Activated CD4-positive, alpha-beta memory T cell treated with anti-CD3 and anti-CD28 coated beads, Interleukin-2, amount 10 ng/mL, durations not matched to agents 7 days and 5 days (primary cell): ENCODE measurements at regions of chr1 and their contacts with region 1.

Region 1: DNA sequence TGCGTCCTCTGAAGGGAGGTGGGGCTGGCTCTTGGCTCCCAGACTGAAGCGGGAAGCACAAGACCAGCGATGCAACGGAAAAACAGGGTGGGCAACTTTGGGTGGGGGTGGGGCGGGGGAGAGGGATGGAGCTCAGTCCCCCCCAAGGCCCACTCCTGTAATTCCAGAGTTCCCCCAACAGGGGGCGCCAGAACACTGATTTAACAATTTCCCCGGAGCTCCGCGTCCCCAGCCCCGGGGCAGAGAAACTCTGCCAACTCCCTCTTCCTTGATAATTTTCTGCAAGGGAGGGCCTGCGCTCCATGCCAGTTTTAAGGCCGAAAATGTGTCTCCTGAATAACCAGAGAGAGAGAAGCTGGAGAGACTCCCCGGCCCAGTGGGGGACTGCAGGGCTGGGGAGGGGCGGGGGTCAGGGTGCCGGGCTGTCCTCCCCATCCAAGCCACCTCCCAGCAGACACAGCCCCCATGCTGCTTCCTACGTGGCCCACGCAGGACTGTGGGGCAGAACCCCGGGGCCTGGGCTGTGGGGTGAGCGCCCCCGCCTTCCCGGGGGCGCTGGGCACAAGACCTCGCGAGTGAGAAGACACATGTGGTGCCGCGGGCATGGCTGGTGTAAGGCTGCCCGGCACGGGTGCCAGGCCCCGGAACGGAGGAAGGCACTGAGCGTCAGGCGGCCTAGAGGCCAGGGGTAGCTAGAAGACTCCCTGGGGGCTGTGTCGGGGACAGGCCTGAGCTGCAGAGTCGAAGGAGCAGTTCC is 51.4 kb downstream of the KIF21B start:
- DNase-seq: peak; percentile 58
- H3K4me3 Mint-ChIP-seq: no peak overlapping the region
- H3K27ac Mint-ChIP-seq: no peak overlapping the region
- H3K4me1 Mint-ChIP-seq: no peaks in the 10 kb centered on the region
- H3K27me3 Mint-ChIP-seq: no peaks in the 10 kb centered on the region

Region 2: DNA sequence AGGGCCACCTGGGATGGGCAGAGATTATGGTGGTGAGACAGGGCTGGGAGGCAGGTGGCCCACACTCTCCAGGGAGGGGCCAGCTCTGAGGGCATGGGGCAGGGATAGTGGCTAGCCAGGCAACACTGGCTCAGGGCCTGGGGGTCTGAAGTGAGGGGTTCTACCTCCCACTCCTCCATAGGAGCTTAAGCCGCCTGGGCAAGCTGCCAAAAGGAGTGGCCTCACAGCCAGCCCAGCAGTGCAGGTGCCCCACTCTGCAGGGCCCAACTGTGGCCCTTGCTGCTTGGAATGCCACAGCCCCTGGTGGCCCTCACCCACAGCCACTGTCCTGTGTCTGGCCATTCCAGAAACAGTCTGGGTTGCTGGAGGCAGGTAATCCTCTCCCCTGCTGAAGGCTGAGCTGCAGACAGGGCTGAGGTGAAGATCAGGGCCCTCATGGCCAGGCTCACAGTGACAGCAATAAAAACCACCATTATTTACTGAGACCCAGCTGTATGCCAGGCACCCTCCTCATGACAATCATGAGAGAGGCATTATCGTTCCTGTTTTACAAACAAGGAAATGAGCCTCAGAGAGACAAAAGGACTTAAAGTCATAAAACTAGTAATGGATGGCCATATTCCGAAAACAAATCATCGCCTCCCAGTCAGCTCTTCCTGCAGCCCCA is 20.4 kb after region 1 on chr1:
- CTCF ChIA-PET with region 1: interaction called, 11 read pairs
- POLR2A ChIA-PET with region 1: no interaction called
- DNase-seq: no peak
- H3K4me3 Mint-ChIP-seq: no peak overlapping the region
- H3K27ac Mint-ChIP-seq: no peak overlapping the region
- H3K4me1 Mint-ChIP-seq: no peaks in the 10 kb centered on the region
- H3K27me3 Mint-ChIP-seq: no peaks in the 10 kb centered on the region

Region 3: GRCh38 chr1:201023517-201023902 is 51.4 kb after region 1 on chr1 and contains the start of gene KIF21B:
- CTCF ChIA-PET with region 1: interaction called, 91 read pairs
- POLR2A ChIA-PET with region 1: interaction called, 23 read pairs
- DNase-seq: peak; percentile 94
- H3K4me3 Mint-ChIP-seq: peak within 1 kb of the TSS; percentile 96
- H3K27ac Mint-ChIP-seq: peak within 1 kb of the TSS; percentile 99
- H3K4me1 Mint-ChIP-seq: peaks cover 73% of the 10 kb centered on the region
- H3K27me3 Mint-ChIP-seq: no peaks in the 10 kb centered on the region
- total RNA-seq, gene KIF21B: 175 to 180 TPM

Region 4: DNA sequence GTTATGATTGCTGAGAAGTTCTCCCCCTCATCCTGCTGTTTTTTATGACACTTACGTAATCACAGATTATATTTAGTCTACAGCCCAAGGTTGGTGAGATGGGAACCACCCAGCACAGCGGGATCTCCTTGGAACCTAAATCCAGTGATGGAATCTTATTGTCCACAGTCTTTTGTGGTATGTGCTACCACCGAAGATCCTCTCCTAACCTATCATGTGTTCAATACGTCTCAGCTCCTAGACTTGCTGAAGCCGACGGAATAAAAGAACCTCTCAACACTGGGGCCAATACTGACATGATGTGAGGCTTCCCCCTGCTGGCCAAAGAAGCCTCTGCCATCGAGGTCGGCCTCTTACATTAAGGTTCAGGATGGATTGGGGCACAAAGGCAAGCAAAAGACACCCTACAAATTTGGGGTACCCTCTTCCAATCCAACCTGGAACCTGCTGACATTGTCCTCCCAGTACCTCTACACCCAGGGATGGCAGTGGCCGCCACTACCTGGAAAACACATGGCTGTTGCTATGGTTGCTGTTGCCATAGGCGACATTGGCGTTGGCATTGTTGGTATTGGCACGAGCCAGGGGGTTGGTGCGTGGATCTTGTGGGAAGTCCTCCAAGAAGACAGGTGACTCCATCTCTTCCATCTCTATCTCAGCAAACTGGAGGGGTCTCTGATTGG is 70.8 kb after region 1 on chr1:
- CTCF ChIA-PET with region 1: interaction called, 60 read pairs
- POLR2A ChIA-PET with region 1: interaction called, 6 read pairs
- DNase-seq: peak; percentile 76
- H3K4me3 Mint-ChIP-seq: no peak overlapping the region
- H3K27ac Mint-ChIP-seq: no peak overlapping the region
- H3K4me1 Mint-ChIP-seq: no peaks in the 10 kb centered on the region
- H3K27me3 Mint-ChIP-seq: peaks cover 15% of the 10 kb centered on the region

Region 5: DNA sequence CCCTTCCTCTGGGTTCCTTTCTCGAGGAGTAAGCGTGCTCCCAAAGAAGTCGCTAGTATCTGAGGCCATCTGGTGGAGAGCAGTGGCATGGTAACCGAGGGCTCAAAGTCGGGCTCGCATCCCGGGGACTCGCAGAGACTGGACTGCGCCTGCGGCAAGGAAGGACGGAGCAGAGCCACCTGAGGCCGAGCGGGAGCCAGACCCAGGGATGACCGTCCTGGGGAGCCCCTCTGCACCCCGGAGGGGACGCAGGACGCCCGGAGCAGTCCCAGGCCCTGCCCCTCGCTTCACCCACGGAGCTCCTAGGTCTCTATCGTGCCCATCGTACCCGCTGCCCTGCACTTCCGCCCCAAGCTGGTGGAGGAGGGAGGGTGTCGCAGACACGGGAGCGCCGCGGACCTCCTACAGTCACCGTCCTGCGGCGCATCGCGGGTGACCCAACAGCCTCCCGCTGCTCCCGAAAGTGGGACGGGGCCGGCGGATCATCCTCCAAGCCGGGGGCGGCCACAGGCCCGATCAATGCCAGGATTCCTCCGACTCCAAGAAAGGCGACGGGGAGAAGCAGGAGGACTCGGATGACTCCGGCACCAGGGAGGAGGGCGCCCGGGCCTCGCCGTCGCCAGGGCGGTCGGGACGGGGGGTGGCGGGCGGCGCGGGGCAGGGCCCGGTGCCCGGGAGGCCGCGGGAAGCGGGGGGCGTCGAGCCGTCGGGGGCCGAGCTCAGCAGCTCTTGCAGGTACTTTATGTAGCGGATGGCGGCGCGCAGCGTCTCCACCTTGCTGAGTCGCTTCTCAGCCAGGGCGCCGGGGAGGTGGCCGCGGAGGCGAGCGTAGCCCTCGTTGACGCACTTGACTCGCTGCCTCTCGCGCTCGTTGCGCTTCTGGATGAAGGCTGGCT is 142.4 kb after region 1 on chr1:
- CTCF ChIA-PET with region 1: interaction called, 22 read pairs
- POLR2A ChIA-PET with region 1: no interaction called
- DNase-seq: peak; percentile 76
- H3K4me3 Mint-ChIP-seq: peak overlapping the region; percentile 77
- H3K27ac Mint-ChIP-seq: no peak overlapping the region
- H3K4me1 Mint-ChIP-seq: peaks cover 6% of the 10 kb centered on the region
- H3K27me3 Mint-ChIP-seq: peaks cover 28% of the 10 kb centered on the region